K562 (cell line): ENCODE measurements at regions of chr2 and their contacts with region 1.

Region 1: GRCh38 chr2:237923481-237924163 is 43.2 kb upstream of the UBE2F start:
- DNase-seq: peak; percentile 82 to 95 (median 94)
- ATAC-seq: peak; percentile 99
- H3K4me3 ChIP-seq: peak overlapping the region; percentile 31
- H3K27ac ChIP-seq: no peak overlapping the region; the same call in 2 of the 3 replicates
- H3K4me1 ChIP-seq: peaks cover 7 to 12% of the 10 kb centered on the region in 2 experiments
- H3K27me3 ChIP-seq: no peaks in the 10 kb centered on the region
- CTCF ChIP-seq: peak; percentile 82 to 86 (median 85)
- EP300 ChIP-seq: no peak
- POLR2A ChIP-seq: no peak
- RAD21 ChIP-seq: peak; percentile 77 to 82

Region 2: GRCh38 chr2:237864940-237865622 is 58.5 kb before region 1 on chr2:
- CTCF ChIA-PET with region 1: no interaction called
- POLR2A ChIA-PET with region 1: no interaction called
- in situ Hi-C with region 1: no loop called
- intact Hi-C with region 1: no loop called
- DNase-seq: no peak
- ATAC-seq: no peak
- H3K4me3 ChIP-seq: no peak overlapping the region
- H3K27ac ChIP-seq: no peak overlapping the region
- H3K4me1 ChIP-seq: peaks cover 0 to 1% of the 10 kb centered on the region in 2 experiments; a peak in 2 of 5 replicates
- H3K27me3 ChIP-seq: peaks cover 25 to 57% of the 10 kb centered on the region in 2 experiments
- CTCF ChIP-seq: no peak
- EP300 ChIP-seq: no peak
- POLR2A ChIP-seq: no peak
- RAD21 ChIP-seq: no peak

Region 3: DNA sequence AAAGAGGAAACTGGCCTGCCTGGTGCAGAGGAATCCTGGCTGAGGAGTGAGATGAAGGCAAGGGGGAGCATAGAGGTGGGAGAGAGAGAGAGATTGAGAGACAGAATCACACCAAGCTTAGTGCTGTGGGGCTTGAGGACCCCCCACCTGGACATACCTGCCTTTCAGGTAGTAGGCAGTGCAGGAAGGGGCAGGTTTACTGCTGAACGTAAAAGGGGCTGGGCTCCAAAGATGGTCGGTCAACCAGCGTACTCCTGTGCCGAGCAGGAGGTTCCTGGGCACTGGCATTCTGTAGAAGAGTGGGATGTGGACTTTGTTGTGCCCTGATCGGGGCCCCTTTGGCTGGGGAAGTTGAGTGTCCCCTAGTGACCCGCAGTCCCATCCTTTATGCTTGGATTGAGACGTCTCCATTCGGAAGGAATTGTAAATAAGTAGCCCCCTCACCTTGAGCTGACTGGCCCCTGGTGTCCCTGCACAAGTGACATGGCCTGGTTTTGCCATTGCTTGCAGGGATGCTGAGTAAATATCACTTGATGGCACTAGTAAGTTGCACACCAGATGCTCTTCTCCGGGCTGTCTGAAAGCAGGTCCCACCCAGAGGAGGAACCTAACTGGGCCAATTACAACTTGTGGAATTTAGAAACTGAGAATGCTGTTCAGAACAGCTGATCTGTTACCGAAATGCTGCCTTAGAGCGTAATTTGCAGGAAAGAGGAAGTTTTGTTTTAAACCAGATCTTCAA is 44.7 kb after region 1 on chr2:
- CTCF ChIA-PET with region 1: interaction called, 3 read pairs
- POLR2A ChIA-PET with region 1: interaction called, 3 read pairs
- in situ Hi-C with region 1: loop called (anchors 5 kb)
- intact Hi-C with region 1: loop called (anchors 1 kb)
- DNase-seq: peak in 2 of 4 experiments; percentile 47 to 52
- ATAC-seq: peak; percentile 8; the same call in 2 of the 3 replicates
- H3K4me3 ChIP-seq: peak overlapping the region; percentile 79
- H3K27ac ChIP-seq: no peak overlapping the region; the same call in 2 of the 3 replicates
- H3K4me1 ChIP-seq: peaks cover 37 to 41% of the 10 kb centered on the region in 2 experiments
- H3K27me3 ChIP-seq: no peaks in the 10 kb centered on the region
- CTCF ChIP-seq: peak in 2 of 3 experiments; percentile 3 to 41; a peak in 2 of 6 replicates
- EP300 ChIP-seq: no peak
- POLR2A ChIP-seq: no peak
- RAD21 ChIP-seq: peak in 1 of 2 experiments; percentile 30; a peak in 2 of 4 replicates

Region 4: GRCh38 chr2:238024986-238025385 is 101.4 kb after region 1 on chr2:
- CTCF ChIA-PET with region 1: no interaction called
- POLR2A ChIA-PET with region 1: no interaction called
- in situ Hi-C with region 1: no loop called
- intact Hi-C with region 1: loop called (anchors 10 kb)
- DNase-seq: no peak
- ATAC-seq: no peak
- H3K4me3 ChIP-seq: no peak overlapping the region
- H3K27ac ChIP-seq: no peak overlapping the region
- H3K4me1 ChIP-seq: no peaks in the 10 kb centered on the region
- H3K27me3 ChIP-seq: no peaks in the 10 kb centered on the region
- CTCF ChIP-seq: no peak
- EP300 ChIP-seq: no peak
- POLR2A ChIP-seq: no peak
- RAD21 ChIP-seq: no peak